KBM-7 (cell line): ENCODE measurements at regions of chr4 and their contacts with region 1.

Region 1: GRCh38 chr4:105146276-105147015 is at the start of gene TET2:
- DNase-seq: peak; percentile 87

Region 2: GRCh38 chr4:105471566-105472176 is 325.2 kb after region 1 on chr4:
- in situ Hi-C with region 1: loop called (anchors 25 kb)
- DNase-seq: peak; percentile 84

Region 3: DNA sequence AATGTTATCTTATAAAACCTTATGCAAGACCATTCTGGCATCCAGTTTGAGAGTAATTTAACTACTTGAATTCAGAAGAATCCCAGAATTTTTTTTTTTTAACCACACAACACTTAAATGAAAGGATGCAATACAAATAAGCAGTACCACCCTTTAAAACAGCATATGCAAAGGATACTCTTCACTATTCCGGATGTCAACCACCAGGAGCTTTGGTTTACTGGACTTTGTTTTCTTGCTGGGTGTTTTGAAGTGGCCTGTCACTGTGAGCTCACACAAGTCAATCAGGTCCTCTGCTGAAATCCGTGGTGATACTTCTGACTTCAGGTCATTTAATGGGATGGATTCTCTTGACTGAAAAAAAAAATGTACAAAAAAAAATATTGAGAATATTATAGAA is 969.6 kb after region 1 on chr4:
- in situ Hi-C with region 1: no loop called
- DNase-seq: no peak